Breast epithelium (tissue), 4 donors: ENCODE measurements at regions of chr12 and their contacts with region 1.

Region 1: DNA sequence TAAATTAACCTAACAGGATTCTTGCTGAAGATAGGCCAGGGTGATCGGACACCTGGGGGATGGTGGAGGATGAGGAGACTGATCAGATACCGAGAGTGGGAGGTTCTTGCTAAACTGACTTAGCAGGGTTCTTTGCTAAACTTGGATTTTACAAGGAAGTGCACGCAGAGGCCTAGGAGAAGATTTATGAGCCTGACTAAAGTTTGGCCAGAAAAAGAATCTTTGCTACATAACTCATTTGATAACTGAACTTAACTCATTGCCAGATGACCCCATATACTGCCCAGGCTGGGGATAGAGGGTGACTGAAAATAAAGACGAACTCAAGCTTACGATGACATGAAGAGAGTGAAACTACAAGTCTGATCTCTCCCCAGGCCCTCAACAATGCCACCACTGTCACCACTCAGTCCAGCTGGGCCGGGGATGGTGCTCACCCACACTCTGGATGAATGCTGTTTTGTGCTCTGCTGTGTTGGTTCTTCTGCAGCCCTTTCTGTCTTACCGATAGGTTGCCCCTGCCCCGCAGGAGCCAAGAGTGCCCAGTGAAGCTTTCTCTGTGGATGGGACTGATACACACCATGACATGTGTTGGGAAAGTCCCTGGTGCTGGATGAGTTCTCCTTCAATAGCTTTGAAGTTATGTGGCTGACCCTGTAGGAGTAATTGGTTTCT is 29.0 kb downstream of the PPFIBP1 start:
- DNase-seq: no peak
- H3K4me3 ChIP-seq: no peak overlapping the region
- H3K27ac ChIP-seq: peak overlapping the region; percentile 65 to 77
- H3K4me1 ChIP-seq: peaks cover 8 to 24% of the 10 kb centered on the region in 2 donors
- H3K27me3 ChIP-seq: no peaks in the 10 kb centered on the region
- CTCF ChIP-seq: no peak
- POLR2A ChIP-seq: no peak

Region 2: DNA sequence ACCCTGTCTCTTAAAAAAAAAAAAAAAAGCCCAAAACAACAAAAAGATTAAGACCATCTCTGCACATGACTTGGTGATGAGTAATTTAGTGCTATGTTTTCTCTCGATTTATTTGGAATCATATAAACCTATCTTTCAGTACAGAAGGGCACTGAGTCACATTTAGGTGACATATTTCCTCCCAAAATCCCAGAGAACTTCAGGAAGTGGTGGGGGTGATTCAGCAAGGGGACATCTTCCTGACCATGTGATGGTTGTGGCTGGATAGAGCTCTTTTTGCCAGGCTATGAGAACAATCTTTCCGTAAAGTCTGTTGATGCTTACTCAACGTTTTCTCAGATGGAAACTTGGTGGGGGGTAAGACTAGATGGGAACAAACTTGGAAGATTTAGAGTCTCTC is 20.9 kb after region 1 on chr12:
- intact Hi-C with region 1: loop called (anchors 1 kb)
- DNase-seq: no peak
- H3K4me3 ChIP-seq: no peak overlapping the region
- H3K27ac ChIP-seq: no peak overlapping the region
- H3K4me1 ChIP-seq: no peaks in the 10 kb centered on the region
- H3K27me3 ChIP-seq: no peaks in the 10 kb centered on the region
- CTCF ChIP-seq: no peak
- POLR2A ChIP-seq: no peak

Region 3: DNA sequence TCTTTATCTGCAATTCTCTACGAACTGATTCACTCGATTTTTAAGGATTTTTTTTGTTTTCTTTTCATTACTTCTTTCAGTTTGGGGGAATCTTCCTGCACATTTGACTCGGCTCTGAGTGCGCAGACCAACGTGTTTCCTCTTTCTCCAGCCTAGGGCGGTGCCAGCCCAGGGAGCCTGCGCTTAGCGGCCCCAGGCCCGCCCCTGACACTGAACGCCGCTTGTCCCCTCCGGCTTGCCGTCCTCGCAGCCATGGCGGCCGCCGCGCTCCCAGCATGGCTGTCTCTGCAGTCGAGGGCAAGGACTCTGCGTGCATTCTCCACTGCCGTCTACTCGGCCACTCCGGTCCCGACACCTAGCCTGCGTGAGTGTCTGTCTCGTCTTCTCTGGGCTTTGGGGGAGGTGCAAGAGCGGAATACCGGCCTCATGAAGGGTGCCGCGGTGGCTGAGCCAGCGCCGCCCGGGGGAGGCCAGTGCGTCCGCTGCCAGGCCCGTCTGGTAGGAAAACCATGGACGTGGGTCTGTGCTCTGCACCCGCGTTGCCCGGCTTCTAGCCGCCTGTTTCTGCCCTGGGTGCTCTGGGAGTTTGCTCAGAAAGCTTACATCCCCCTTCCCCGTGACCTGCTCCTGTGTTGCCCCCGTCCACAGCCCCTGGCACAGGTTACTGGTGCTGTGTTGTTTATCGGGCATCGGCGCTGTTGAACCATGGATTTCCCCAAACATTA is 157.7 kb after region 1 on chr12 and contains the start of gene MRPS35:
- intact Hi-C with region 1: no loop called
- DNase-seq: peak; percentile 83 to 88
- H3K4me3 ChIP-seq: peak within 1 kb of the TSS; percentile 95 to 97 (median 97)
- H3K27ac ChIP-seq: peak within 1 kb of the TSS; percentile 78 to 85
- H3K4me1 ChIP-seq: peaks cover 0 to 12% of the 10 kb centered on the region in 2 donors
- H3K27me3 ChIP-seq: no peaks in the 10 kb centered on the region
- CTCF ChIP-seq: no peak
- POLR2A ChIP-seq: peak; percentile 51
- total RNA-seq, gene MRPS35: 37.7 to 64.1 (median 43.5) TPM

Region 4: DNA sequence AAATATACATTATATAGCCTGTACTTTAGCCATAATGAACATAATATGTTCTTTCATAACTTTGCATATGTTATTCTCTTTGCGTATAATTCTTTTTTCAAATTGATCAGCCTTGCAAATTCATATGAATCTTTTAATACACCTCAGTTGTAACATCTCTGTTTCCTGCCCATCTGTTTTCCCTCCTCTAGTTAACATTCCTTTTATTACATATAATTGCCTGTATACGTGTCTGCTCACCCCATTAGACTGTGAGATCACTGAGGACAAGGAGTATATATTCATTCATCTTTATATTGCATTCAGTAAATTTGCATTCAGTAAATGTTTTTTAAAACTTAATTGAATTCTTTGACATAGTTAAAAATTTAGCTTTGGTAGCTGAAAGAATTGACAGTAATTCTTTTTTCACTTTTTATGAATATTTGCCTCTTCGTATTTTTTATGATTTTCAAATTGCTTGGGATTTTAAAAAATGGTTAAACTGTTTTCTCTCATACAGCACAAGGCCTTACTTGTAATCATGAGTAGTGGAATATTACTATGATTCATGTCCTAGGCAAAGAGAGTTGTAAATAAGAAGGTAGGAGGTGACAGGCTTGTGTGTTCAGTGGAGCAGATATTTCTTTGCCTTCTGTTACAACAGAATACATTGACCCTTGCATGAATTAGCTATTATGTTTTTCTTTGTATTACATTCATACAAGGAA is 194.2 kb after region 1 on chr12:
- intact Hi-C with region 1: no loop called
- DNase-seq: no peak
- H3K4me3 ChIP-seq: no peak overlapping the region
- H3K27ac ChIP-seq: peak overlapping the region; percentile 61 to 86
- H3K4me1 ChIP-seq: no peaks in the 10 kb centered on the region
- H3K27me3 ChIP-seq: no peaks in the 10 kb centered on the region
- CTCF ChIP-seq: no peak
- POLR2A ChIP-seq: no peak